Colonic mucosa (tissue), 4 donors: ENCODE measurements at regions of chr3 and their contacts with region 1.

Region 1: DNA sequence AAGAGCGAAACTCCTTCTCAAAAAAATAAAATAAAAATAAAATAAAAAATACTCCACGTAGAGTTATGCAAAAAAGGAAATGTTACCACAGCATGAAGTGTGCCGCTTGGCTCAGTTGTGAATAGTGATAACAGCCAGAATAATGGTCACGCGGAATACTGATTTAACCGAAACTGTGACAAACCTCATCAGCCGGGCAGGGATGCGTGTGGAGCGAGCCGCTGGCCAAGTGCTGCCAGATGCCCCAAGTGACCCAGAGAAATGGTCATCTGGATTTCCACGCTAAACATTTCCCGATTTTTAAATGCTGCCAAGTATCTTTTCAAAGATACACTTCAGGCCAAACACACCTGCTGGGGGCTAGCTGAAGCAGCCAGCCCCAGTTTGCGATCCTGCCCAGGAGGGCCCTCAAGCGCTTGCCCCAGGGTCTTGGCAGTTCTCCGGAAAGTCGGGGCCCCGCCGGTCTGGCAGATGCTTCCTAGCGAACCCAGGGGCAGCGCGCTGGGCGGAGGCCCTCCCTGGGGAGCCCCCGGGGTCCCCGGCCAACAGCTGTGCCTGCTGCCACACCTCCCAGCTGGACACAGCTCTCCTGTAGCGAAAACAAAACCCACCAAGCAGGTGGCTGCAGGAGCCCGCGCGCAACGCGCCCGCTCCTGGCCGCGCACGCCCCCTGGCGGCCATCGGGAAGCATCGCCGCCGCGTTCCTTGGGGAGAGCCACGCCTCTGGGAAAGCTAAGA is 35.1 kb downstream of the CMTM6 start:
- DNase-seq: peak; percentile 74
- H3K4me3 ChIP-seq: peak overlapping the region; percentile 31
- H3K27ac ChIP-seq: no peak overlapping the region
- H3K4me1 ChIP-seq: no peaks in the 10 kb centered on the region
- H3K27me3 ChIP-seq: no peaks in the 10 kb centered on the region
- CTCF ChIP-seq: peak; percentile 98

Region 2: GRCh38 chr3:32296256-32297204 is 171.0 kb before region 1 on chr3:
- intact Hi-C with region 1: loop called (anchors 5 kb)
- DNase-seq: peak; percentile 52
- H3K4me3 ChIP-seq: no peak overlapping the region
- H3K27ac ChIP-seq: no peak overlapping the region
- H3K4me1 ChIP-seq: no peaks in the 10 kb centered on the region
- H3K27me3 ChIP-seq: no peaks in the 10 kb centered on the region
- CTCF ChIP-seq: peak; percentile 86

Region 3: DNA sequence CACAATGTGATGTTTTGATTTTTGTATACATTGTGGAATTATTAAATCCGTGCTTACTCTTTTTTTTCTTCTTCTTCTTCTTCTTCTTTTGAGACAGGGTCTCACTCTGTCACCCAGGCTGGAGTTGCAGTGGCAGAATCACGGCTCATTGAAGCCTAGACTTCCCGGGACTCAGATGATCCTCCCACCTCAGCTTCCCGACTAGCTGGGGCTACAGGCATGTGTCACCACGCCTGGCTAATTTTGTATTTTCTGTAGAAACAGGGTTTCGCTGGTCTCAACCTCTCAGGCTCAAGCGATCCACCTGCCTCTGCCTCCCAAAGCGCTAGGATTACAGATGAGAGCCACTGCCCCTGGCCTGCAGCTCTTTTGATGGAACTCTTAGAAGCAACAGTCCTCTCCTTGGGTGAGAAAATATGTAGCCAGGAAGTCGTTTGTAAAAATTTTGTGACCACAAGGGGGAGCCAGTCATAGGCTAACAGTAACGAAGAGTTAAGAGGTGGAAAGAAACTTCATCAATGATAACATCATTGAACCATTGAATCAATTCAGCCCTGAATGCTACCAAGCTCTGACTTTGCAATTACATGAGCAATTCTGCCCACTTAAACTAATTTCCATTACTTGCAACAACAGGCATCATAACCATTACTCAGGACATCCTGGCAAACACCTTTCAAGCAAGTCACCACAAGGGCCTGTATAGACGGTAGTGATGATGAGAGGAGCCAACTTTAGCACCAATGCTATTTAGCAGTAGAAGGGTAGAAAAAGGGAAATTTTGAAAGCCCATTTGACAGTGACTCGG is 92.5 kb before region 1 on chr3:
- intact Hi-C with region 1: loop called (anchors 2 kb)
- DNase-seq: peak; percentile 82
- H3K4me3 ChIP-seq: no peak overlapping the region
- H3K27ac ChIP-seq: no peak overlapping the region
- H3K4me1 ChIP-seq: no peaks in the 10 kb centered on the region
- H3K27me3 ChIP-seq: no peaks in the 10 kb centered on the region
- CTCF ChIP-seq: peak; percentile 46